ENCODE measurements at regions of chr11 and their contacts with region 1.

Region 1: GRCh38 chr11:95150946-95151684 is 61.5 kb downstream of the ENDOD1 start:
- DNase-seq: peak; percentile 98 to 99
- H3K4me3 ChIP-seq: peak overlapping the region; percentile 51
- H3K4me3 Mint-ChIP-seq: peak overlapping the region; percentile 93
- H3K27ac Mint-ChIP-seq: peak overlapping the region; percentile 94
- H3K4me1 ChIP-seq: peaks cover 14% of the 10 kb centered on the region
- H3K4me1 Mint-ChIP-seq: peaks cover 20% of the 10 kb centered on the region
- H3K27me3 ChIP-seq: no peaks in the 10 kb centered on the region
- H3K27me3 Mint-ChIP-seq: no peaks in the 10 kb centered on the region
- CTCF ChIP-seq: peak; percentile 96 to 97

Region 2: DNA sequence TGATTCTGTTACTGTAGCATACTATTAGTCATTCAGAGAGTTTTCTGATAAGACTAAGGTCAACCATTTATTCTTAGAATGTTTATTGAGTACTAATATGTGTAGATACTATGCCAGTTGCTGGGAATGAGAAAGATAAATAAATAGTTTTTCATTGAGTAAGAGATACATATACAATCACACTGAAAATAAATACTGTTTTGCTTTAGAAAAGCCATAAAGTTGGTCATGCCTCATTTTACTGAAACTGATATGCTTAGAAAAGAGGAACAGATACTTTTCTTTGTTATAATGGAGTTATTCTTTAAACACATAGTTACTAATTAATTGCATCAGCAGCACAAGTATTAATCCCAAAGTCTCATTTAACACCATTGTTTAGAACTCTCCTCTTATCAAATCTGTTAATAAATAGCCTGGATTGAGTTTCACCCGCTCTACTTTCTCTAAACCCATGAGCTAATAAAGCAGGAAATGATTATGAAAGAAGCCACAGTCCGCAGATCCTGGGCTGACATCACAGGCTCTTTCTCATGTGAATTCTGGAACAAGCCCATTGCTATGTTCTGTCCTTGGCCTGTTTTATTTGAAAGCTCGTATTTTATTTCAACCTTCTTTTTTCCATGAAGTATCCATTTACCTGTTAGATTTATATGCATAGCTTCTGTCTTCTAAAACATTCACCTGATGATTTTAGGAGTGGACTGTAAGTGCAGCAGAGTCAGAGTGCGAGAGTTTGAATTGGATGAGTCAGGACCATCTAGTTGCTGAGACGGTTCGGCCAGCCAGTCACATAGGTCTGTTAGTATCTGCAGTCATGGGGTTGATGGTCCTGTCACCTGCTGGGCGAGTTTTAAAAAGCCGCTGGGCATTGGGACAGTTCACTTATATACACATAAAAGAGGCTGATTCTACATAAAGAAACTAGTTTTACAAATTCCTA is 548.4 kb before region 1 on chr11:
- CTCF ChIA-PET with region 1: no interaction called
- POLR2A ChIA-PET with region 1: no interaction called
- intact Hi-C with region 1: no loop called
- DNase-seq: peak; percentile 58 to 79
- H3K4me3 ChIP-seq: no peak overlapping the region
- H3K4me3 Mint-ChIP-seq: peak overlapping the region; percentile 63
- H3K27ac Mint-ChIP-seq: peak overlapping the region; percentile 68
- H3K4me1 ChIP-seq: peaks cover 30% of the 10 kb centered on the region
- H3K4me1 Mint-ChIP-seq: peaks cover 20% of the 10 kb centered on the region
- H3K27me3 ChIP-seq: no peaks in the 10 kb centered on the region
- H3K27me3 Mint-ChIP-seq: no peaks in the 10 kb centered on the region
- CTCF ChIP-seq: peak in 1 of 2 experiments; percentile 39

Region 3: DNA sequence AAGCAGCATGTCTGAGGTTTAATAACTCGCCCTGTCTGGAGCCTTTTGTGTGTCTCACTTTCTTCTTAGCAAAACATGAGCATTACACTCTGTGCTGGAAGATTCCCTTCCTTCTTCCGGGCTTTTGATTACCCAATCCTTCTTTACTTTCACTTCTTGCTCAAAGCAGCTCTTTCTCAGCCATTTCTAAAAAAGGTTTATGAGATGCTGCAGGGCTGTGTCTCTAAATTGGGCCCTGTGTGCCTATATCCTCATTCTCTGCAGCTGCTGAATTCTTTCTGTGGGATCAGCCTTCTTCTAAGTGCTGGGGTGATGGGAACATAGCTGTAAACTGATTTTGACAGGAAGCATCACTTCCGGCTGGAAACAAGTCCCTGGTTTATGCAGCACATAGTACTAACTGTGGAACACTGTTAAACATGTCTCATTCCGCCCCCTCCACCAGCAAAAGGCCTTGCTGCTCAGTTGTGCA is 512.2 kb before region 1 on chr11:
- CTCF ChIA-PET with region 1: no interaction called
- POLR2A ChIA-PET with region 1: no interaction called
- intact Hi-C with region 1: no loop called
- DNase-seq: no peak
- H3K4me3 ChIP-seq: no peak overlapping the region
- H3K4me3 Mint-ChIP-seq: no peak overlapping the region
- H3K27ac Mint-ChIP-seq: no peak overlapping the region
- H3K4me1 ChIP-seq: peaks cover 29% of the 10 kb centered on the region
- H3K4me1 Mint-ChIP-seq: peaks cover 26% of the 10 kb centered on the region
- H3K27me3 ChIP-seq: no peaks in the 10 kb centered on the region
- H3K27me3 Mint-ChIP-seq: no peaks in the 10 kb centered on the region
- CTCF ChIP-seq: no peak

Region 4: DNA sequence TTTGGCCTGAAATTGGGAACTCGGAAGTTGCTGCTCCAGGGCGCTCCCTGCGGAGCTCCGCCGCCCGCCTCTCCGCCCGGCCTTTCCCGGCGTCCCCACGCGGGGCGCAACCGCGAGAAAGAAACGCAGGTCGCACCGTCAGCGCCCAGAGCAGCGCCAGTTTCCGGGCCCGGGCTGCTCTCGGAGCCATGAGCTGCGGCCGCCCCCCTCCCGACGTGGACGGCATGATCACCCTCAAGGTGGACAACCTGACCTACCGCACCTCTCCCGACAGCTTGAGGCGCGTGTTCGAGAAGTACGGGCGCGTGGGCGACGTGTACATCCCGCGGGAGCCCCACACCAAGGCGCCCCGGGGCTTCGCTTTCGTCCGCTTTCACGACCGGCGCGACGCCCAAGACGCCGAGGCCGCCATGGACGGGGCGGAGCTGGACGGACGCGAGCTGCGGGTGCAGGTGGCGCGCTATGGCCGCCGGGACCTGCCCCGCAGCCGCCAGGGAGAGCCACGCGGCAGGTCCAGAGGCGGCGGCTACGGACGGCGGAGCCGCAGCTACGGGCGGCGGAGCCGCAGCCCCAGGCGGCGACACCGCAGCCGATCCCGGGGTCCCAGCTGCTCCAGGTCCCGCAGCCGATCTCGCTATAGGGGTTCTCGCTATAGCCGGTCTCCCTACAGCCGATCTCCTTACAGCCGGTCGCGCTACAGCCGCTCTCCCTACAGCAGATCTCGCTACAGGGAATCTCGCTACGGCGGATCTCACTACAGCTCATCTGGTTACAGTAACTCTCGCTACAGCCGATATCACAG is 83.9 kb before region 1 on chr11:
- CTCF ChIA-PET with region 1: interaction called, 42 read pairs
- POLR2A ChIA-PET with region 1: interaction called, 7 read pairs
- intact Hi-C with region 1: loop called (anchors 1 kb)
- DNase-seq: peak; percentile 88 to 95
- H3K4me3 ChIP-seq: peak overlapping the region; percentile 46
- H3K4me3 Mint-ChIP-seq: peak overlapping the region; percentile 100
- H3K27ac Mint-ChIP-seq: peak overlapping the region; percentile 99
- H3K4me1 ChIP-seq: peaks cover 12% of the 10 kb centered on the region
- H3K4me1 Mint-ChIP-seq: peaks cover 15% of the 10 kb centered on the region
- H3K27me3 ChIP-seq: no peaks in the 10 kb centered on the region
- H3K27me3 Mint-ChIP-seq: peaks cover 12% of the 10 kb centered on the region
- CTCF ChIP-seq: peak; percentile 52 to 98

Region 5: GRCh38 chr11:95222817-95223216 is 71.7 kb after region 1 on chr11:
- CTCF ChIA-PET with region 1: no interaction called
- POLR2A ChIA-PET with region 1: no interaction called
- intact Hi-C with region 1: no loop called
- DNase-seq: no peak
- H3K4me3 ChIP-seq: no peak overlapping the region
- H3K4me3 Mint-ChIP-seq: no peak overlapping the region
- H3K27ac Mint-ChIP-seq: no peak overlapping the region
- H3K4me1 ChIP-seq: no peaks in the 10 kb centered on the region
- H3K4me1 Mint-ChIP-seq: no peaks in the 10 kb centered on the region
- H3K27me3 ChIP-seq: no peaks in the 10 kb centered on the region
- H3K27me3 Mint-ChIP-seq: no peaks in the 10 kb centered on the region
- CTCF ChIP-seq: no peak

Region 6: GRCh38 chr11:95279921-95280868 is 129.1 kb after region 1 on chr11:
- CTCF ChIA-PET with region 1: interaction called, 6 read pairs
- POLR2A ChIA-PET with region 1: no interaction called
- intact Hi-C with region 1: loop called (anchors 1 kb)
- DNase-seq: no peak
- H3K4me3 ChIP-seq: no peak overlapping the region
- H3K4me3 Mint-ChIP-seq: peak overlapping the region; percentile 31
- H3K27ac Mint-ChIP-seq: peak overlapping the region; percentile 83
- H3K4me1 ChIP-seq: peaks cover 68% of the 10 kb centered on the region
- H3K4me1 Mint-ChIP-seq: peaks cover 52% of the 10 kb centered on the region
- H3K27me3 ChIP-seq: no peaks in the 10 kb centered on the region
- H3K27me3 Mint-ChIP-seq: no peaks in the 10 kb centered on the region
- CTCF ChIP-seq: no peak

Region 7: GRCh38 chr11:95419915-95420314 is 268.8 kb after region 1 on chr11:
- CTCF ChIA-PET with region 1: no interaction called
- POLR2A ChIA-PET with region 1: no interaction called
- intact Hi-C with region 1: loop called (anchors 10 kb)
- DNase-seq: no peak
- H3K4me3 ChIP-seq: no peak overlapping the region
- H3K4me3 Mint-ChIP-seq: no peak overlapping the region
- H3K27ac Mint-ChIP-seq: no peak overlapping the region
- H3K4me1 ChIP-seq: no peaks in the 10 kb centered on the region
- H3K4me1 Mint-ChIP-seq: no peaks in the 10 kb centered on the region
- H3K27me3 ChIP-seq: no peaks in the 10 kb centered on the region
- H3K27me3 Mint-ChIP-seq: peaks cover under 1% of the 10 kb centered on the region
- CTCF ChIP-seq: no peak

Region 8: GRCh38 chr11:95592471-95592870 is 441.4 kb after region 1 on chr11:
- CTCF ChIA-PET with region 1: no interaction called
- POLR2A ChIA-PET with region 1: no interaction called
- intact Hi-C with region 1: loop called (anchors 5 kb)
- DNase-seq: no peak
- H3K4me3 ChIP-seq: no peak overlapping the region
- H3K4me3 Mint-ChIP-seq: no peak overlapping the region
- H3K27ac Mint-ChIP-seq: no peak overlapping the region
- H3K4me1 ChIP-seq: no peaks in the 10 kb centered on the region
- H3K4me1 Mint-ChIP-seq: no peaks in the 10 kb centered on the region
- H3K27me3 ChIP-seq: no peaks in the 10 kb centered on the region; the same call in 1 of the 2 replicates
- H3K27me3 Mint-ChIP-seq: peaks cover 11% of the 10 kb centered on the region
- CTCF ChIP-seq: no peak

Region 9: GRCh38 chr11:95790123-95790932 is 639.2 kb after region 1 on chr11 and contains the start of gene CEP57:
- CTCF ChIA-PET with region 1: interaction called, 6 read pairs
- POLR2A ChIA-PET with region 1: interaction called, 6 read pairs
- intact Hi-C with region 1: loop called (anchors 1 kb)
- DNase-seq: peak; percentile 99
- H3K4me3 ChIP-seq: peak within 1 kb of the TSS; percentile 72
- H3K4me3 Mint-ChIP-seq: peak within 1 kb of the TSS; percentile 72
- H3K27ac Mint-ChIP-seq: peak within 1 kb of the TSS; percentile 100
- H3K4me1 ChIP-seq: peaks cover 19% of the 10 kb centered on the region; the same call in 1 of the 2 replicates
- H3K4me1 Mint-ChIP-seq: peaks cover 23% of the 10 kb centered on the region
- H3K27me3 ChIP-seq: no peaks in the 10 kb centered on the region
- H3K27me3 Mint-ChIP-seq: no peaks in the 10 kb centered on the region
- CTCF ChIP-seq: no peak
- total RNA-seq, gene CEP57: 117 and 125 TPM in 2 replicates